ENCODE measurements at regions of chr13 and their contacts with region 1.

Region 1: GRCh38 chr13:105918842-105919741 is 616.4 kb downstream of the EFNB2 start:
- DNase-seq: peak; percentile 82
- ATAC-seq: peak; percentile 78
- H3K4me3 ChIP-seq: no peak overlapping the region
- H3K27ac ChIP-seq: peak overlapping the region; percentile 34; the same call in 1 of the 2 replicates
- H3K4me1 ChIP-seq: peaks cover 3% of the 10 kb centered on the region; the same call in 1 of the 2 replicates
- H3K27me3 ChIP-seq: no peaks in the 10 kb centered on the region
- CTCF ChIP-seq: no peak
- POLR2A ChIP-seq: no peak
- RAD21 ChIP-seq: no peak

Region 2: GRCh38 chr13:105721016-105721415 is 198.1 kb before region 1 on chr13:
- CTCF ChIA-PET with region 1: no interaction called
- POLR2A ChIA-PET with region 1: no interaction called
- dilution Hi-C with region 1: no loop called
- in situ Hi-C with region 1: no loop called
- intact Hi-C with region 1: no loop called
- DNase-seq: no peak
- ATAC-seq: no peak
- H3K4me3 ChIP-seq: no peak overlapping the region
- H3K27ac ChIP-seq: no peak overlapping the region
- H3K4me1 ChIP-seq: no peaks in the 10 kb centered on the region
- H3K27me3 ChIP-seq: no peaks in the 10 kb centered on the region
- CTCF ChIP-seq: no peak
- POLR2A ChIP-seq: no peak
- RAD21 ChIP-seq: no peak

Region 3: GRCh38 chr13:106010836-106011235 is 91.7 kb after region 1 on chr13:
- CTCF ChIA-PET with region 1: no interaction called
- POLR2A ChIA-PET with region 1: no interaction called
- dilution Hi-C with region 1: no loop called
- in situ Hi-C with region 1: no loop called
- intact Hi-C with region 1: no loop called
- DNase-seq: no peak
- ATAC-seq: no peak
- H3K4me3 ChIP-seq: no peak overlapping the region
- H3K27ac ChIP-seq: no peak overlapping the region
- H3K4me1 ChIP-seq: no peaks in the 10 kb centered on the region
- H3K27me3 ChIP-seq: no peaks in the 10 kb centered on the region; the same call in 1 of the 2 replicates
- CTCF ChIP-seq: no peak
- POLR2A ChIP-seq: no peak
- RAD21 ChIP-seq: no peak

Region 4: GRCh38 chr13:106156468-106156867 is 237.4 kb after region 1 on chr13:
- CTCF ChIA-PET with region 1: no interaction called
- POLR2A ChIA-PET with region 1: no interaction called
- dilution Hi-C with region 1: no loop called
- in situ Hi-C with region 1: no loop called
- intact Hi-C with region 1: loop called (anchors 1 kb)
- DNase-seq: peak; percentile 99
- ATAC-seq: peak; percentile 89
- H3K4me3 ChIP-seq: no peak overlapping the region
- H3K27ac ChIP-seq: peak overlapping the region; percentile 61
- H3K4me1 ChIP-seq: peaks cover 7% of the 10 kb centered on the region
- H3K27me3 ChIP-seq: no peaks in the 10 kb centered on the region
- CTCF ChIP-seq: no peak
- POLR2A ChIP-seq: peak; percentile 72; the same call in 1 of the 2 replicates
- RAD21 ChIP-seq: no peak

Region 5: GRCh38 chr13:106393781-106394180 is 474.7 kb after region 1 on chr13:
- CTCF ChIA-PET with region 1: no interaction called
- POLR2A ChIA-PET with region 1: no interaction called
- dilution Hi-C with region 1: no loop called
- in situ Hi-C with region 1: no loop called
- intact Hi-C with region 1: no loop called
- DNase-seq: peak; percentile 43
- ATAC-seq: peak; percentile 57; the same call in 1 of the 2 replicates
- H3K4me3 ChIP-seq: no peak overlapping the region
- H3K27ac ChIP-seq: no peak overlapping the region
- H3K4me1 ChIP-seq: no peaks in the 10 kb centered on the region
- H3K27me3 ChIP-seq: no peaks in the 10 kb centered on the region
- CTCF ChIP-seq: no peak
- POLR2A ChIP-seq: no peak
- RAD21 ChIP-seq: no peak

Region 6: GRCh38 chr13:106528718-106529414 is 609.8 kb after region 1 on chr13:
- CTCF ChIA-PET with region 1: no interaction called
- POLR2A ChIA-PET with region 1: no interaction called
- dilution Hi-C with region 1: no loop called
- in situ Hi-C with region 1: no loop called
- intact Hi-C with region 1: loop called (anchors 2 kb)
- DNase-seq: no peak
- ATAC-seq: no peak
- H3K4me3 ChIP-seq: no peak overlapping the region
- H3K27ac ChIP-seq: no peak overlapping the region
- H3K4me1 ChIP-seq: peaks cover 5% of the 10 kb centered on the region; the same call in 1 of the 2 replicates
- H3K27me3 ChIP-seq: no peaks in the 10 kb centered on the region
- CTCF ChIP-seq: no peak
- POLR2A ChIP-seq: no peak
- RAD21 ChIP-seq: no peak

Region 7: DNA sequence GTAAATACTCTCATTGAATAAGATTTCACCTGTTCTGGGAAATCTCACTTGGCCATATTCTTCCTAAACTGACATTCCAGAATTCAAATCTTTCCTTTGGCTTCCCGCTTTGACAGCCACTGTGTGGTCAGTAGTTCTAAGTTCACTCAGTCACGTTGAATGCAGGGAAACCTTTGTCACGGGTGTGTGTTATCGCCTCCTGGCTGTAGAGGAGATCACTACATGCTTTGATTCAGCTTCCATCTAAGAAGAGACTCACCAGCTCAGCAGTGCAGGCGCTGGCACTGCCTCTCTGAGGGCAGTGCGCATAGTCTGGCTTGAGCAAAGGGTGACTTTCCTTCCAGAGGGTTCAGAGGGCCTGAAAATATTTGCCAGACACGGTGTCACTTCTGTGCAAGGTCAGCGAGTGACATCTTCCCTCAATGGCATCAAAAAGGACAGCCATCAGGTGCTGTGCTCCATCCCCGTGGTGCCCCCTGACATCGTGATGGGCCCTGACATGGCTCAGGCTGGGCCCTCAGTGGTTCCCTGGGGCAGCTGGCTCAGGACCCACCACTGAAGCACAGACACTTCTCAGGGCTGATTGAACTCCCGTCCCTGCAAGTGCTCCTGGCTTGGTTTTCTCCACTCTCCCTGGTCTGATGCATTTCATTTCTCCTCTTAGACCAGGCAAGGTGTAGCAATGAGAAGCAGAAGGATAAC is 1284.2 kb after region 1 on chr13:
- CTCF ChIA-PET with region 1: no interaction called
- POLR2A ChIA-PET with region 1: no interaction called
- dilution Hi-C with region 1: no loop called
- in situ Hi-C with region 1: no loop called
- intact Hi-C with region 1: no loop called
- DNase-seq: no peak
- ATAC-seq: no peak
- H3K4me3 ChIP-seq: no peak overlapping the region
- H3K27ac ChIP-seq: no peak overlapping the region
- H3K4me1 ChIP-seq: peaks cover 4% of the 10 kb centered on the region
- H3K27me3 ChIP-seq: no peaks in the 10 kb centered on the region
- CTCF ChIP-seq: no peak
- POLR2A ChIP-seq: no peak
- RAD21 ChIP-seq: no peak

Measured in IMR-90 (cell line).